ENCODE measurements at regions of chr1 and their contacts with region 1.

Region 1: DNA sequence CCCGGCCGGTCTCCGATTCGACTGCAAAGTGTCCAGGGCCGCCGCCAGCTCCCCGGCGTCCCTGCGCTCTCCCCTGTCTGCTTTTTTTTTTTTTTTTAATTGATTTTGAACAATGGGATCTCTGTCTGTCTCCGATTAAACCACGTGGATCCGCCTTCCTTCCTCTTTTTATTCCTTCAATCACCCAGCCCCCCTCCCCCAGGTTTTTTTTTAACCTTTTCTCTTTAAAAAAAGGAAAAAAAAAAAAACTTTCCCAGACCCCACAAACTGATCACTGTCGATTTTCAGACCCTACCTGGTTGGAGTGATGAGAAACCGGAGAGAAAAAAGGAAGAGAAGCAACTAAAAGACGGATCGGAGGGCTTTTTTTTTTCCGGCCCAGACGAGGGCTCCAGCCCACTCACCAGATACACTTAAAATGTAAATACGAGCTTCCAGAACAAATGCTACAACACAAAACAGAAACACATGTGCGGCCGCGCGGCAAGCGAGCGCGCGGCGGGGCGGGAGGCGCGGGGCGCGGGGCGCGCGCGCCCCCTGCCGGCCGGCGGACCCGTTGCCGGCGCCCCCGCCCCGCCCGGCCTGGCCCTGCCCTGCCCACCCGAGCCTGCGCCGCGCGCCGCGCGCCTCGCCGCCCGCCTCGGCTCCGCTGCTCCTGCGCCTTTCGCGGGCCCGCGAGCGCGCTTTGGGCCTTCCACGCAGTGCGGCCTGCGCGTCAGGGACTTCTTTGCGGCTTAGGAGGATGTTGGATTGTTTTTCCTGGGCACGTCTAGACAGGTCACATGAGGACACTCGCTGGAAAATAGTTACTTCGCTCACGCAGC is at the start of gene RCC2:
- DNase-seq: peak; percentile 82
- ATAC-seq: peak; percentile 71
- H3K4me3 Mint-ChIP-seq: peak within 1 kb of the TSS; percentile 93
- H3K27ac Mint-ChIP-seq: peak within 1 kb of the TSS; percentile 97
- H3K4me1 Mint-ChIP-seq: peaks cover 37% of the 10 kb centered on the region
- H3K27me3 Mint-ChIP-seq: no peaks in the 10 kb centered on the region
- total RNA-seq, gene RCC2: 106 to 113 TPM

Region 2: DNA sequence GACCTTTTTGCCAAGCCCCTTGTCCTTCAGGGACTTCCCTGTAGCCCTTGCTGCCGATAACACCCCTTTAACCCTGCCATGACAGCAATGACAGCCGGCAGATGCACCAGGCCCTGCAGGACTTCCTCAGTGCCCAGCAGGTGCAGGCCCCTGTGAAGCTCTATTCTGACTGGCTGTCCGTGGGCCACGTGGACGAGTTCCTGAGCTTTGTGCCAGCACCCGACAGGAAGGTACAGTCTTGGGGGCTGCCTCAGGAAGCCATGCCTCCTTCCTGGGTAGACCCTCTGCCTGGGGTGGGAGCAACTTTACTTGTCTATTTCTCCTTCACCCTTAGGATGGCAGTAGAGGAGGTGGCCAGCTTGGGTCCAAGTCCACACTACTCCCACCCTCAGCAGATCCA is 83.6 kb before region 1 on chr1:
- POLR2A ChIA-PET with region 1: interaction called, 14 read pairs
- DNase-seq: peak; percentile 69
- ATAC-seq: peak; percentile 98
- H3K4me3 Mint-ChIP-seq: peak overlapping the region; percentile 75
- H3K27ac Mint-ChIP-seq: peak overlapping the region; percentile 85
- H3K4me1 Mint-ChIP-seq: peaks cover 12% of the 10 kb centered on the region
- H3K27me3 Mint-ChIP-seq: no peaks in the 10 kb centered on the region

Region 3: GRCh38 chr1:17460245-17460644 is 20.8 kb after region 1 on chr1:
- POLR2A ChIA-PET with region 1: no interaction called
- DNase-seq: no peak
- ATAC-seq: no peak
- H3K4me3 Mint-ChIP-seq: no peak overlapping the region
- H3K27ac Mint-ChIP-seq: no peak overlapping the region
- H3K4me1 Mint-ChIP-seq: no peaks in the 10 kb centered on the region
- H3K27me3 Mint-ChIP-seq: no peaks in the 10 kb centered on the region